ENCODE measurements at regions of chr10 and their contacts with region 1.

Region 1: GRCh38 chr10:11757821-11758463 is 15.8 kb downstream of the ECHDC3 start:
- DNase-seq: peak; percentile 59 to 87 (median 79)
- ATAC-seq: peak; percentile 94 to 100 (median 96)
- H3K4me3 ChIP-seq: no peak overlapping the region
- H3K4me3 Mint-ChIP-seq: no peak overlapping the region
- H3K27ac ChIP-seq: no peak overlapping the region
- H3K27ac Mint-ChIP-seq: peak overlapping the region; percentile 6 to 39
- H3K4me1 ChIP-seq: peaks cover 0 to 3% of the 10 kb centered on the region in 2 experiments
- H3K4me1 Mint-ChIP-seq: peaks cover 0 to 5% (median 4%) of the 10 kb centered on the region in 3 donors
- H3K27me3 ChIP-seq: peaks cover 0 to 5% of the 10 kb centered on the region in 2 experiments
- H3K27me3 Mint-ChIP-seq: peaks cover 0 to 3% of the 10 kb centered on the region in 2 donors

Region 2: DNA sequence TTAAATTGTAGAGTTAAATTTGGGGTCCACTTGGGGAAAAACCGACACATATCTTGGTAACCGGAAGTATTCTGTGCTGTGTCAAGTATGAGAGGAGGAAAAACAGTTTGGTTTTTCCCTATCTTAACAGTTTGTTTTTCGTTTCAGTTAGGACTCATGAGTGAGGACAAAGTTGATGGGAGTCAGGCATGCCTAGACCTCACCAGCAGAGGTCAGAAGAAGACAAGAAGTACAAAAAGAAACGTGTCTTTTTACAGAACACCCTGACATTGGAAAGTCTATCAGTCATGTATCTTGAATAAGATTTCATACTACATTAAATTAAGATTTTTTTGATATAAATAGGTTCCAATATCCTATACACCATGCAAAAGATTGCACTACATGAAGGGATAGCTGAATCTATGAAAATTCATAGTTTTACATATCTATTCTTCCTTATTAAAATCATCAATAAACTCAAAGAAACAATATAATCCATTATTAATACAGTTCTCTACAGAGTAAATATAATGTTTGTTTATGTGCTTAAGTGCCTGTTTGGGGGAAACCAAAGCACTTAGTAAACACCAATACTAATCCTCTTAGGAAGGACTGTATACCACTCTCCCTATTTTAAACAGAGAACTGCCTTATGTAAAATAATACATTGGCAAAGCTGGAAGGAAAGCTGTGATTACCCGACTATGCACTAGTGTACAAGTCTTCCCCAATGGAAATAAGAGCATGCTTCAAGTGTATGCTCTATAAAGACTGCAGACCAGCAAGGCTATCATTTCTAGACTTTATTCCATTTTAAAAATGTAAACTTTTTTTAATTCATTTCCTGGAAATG is 242.1 kb before region 1 on chr10:
- CTCF ChIA-PET with region 1: interaction called, 19 to 25 read pairs
- POLR2A ChIA-PET with region 1: interaction called in 1 of 2 experiments, 4 read pairs
- DNase-seq: peak in 31 of 35 experiments; percentile 8 to 78 (median 35)
- ATAC-seq: peak; percentile 54 to 71 (median 62)
- H3K4me3 ChIP-seq: no peak overlapping the region
- H3K4me3 Mint-ChIP-seq: no peak overlapping the region
- H3K27ac ChIP-seq: no peak overlapping the region
- H3K27ac Mint-ChIP-seq: no peak overlapping the region
- H3K4me1 ChIP-seq: peaks cover 0 to 2% of the 10 kb centered on the region in 2 experiments
- H3K4me1 Mint-ChIP-seq: peaks cover 4 to 7% (median 4%) of the 10 kb centered on the region in 3 donors
- H3K27me3 ChIP-seq: no peaks in the 10 kb centered on the region
- H3K27me3 Mint-ChIP-seq: no peaks in the 10 kb centered on the region

Region 3: GRCh38 chr10:12806228-12807095 is 1048.5 kb after region 1 on chr10:
- CTCF ChIA-PET with region 1: no interaction called
- POLR2A ChIA-PET with region 1: interaction called in 1 of 2 experiments, 10 read pairs
- DNase-seq: no peak
- ATAC-seq: no peak
- H3K4me3 ChIP-seq: no peak overlapping the region
- H3K4me3 Mint-ChIP-seq: no peak overlapping the region
- H3K27ac ChIP-seq: no peak overlapping the region
- H3K27ac Mint-ChIP-seq: no peak overlapping the region
- H3K4me1 ChIP-seq: no peaks in the 10 kb centered on the region
- H3K4me1 Mint-ChIP-seq: no peaks in the 10 kb centered on the region
- H3K27me3 ChIP-seq: no peaks in the 10 kb centered on the region
- H3K27me3 Mint-ChIP-seq: no peaks in the 10 kb centered on the region

Measured in T-cell (primary cell).